SK-N-SH (cell line): ENCODE measurements at regions of chr11 and their contacts with region 1.

Region 1: DNA sequence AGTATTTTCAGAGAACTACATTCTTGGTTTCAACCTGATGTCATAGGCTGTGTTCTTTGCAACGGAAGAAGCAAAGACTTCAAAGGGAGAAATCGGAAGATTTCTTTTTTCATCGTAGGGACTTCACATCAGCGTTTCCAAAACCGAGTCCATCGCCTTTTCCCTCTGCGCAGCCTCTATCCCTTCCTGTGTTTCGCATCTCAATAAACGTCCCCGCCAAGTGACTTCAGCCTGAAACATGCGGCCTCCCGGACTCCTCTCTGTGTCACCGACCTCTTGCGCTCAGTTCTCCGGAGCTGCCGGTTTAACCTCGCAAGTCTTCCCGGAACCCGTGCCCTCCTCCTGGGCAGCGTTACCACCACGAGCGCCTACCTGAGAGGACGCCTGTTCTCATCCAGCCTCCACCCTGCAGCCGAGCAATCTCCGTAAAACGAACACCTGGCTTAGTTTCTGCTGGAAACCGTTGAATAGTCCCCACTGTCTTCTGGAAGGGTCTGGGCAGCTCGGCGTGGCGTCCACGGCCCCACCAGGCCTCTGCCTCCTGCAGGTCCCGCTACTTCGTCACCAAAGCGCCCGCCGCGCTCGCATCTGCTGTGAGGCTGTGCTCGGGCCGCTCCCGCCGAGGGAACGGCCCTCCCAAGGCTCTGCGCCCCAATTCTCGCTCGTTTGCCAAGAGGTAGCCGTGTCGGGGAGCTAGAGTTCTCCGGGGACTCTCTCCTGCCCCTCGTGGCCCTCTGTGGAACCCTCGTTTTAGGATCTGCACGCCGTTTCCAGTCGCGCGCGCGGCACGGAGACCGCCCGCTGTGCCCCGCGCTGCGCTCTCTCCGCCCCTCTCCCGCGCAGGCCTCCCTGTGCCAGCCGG is at the start of gene GLB1L3:
- DNase-seq: peak; percentile 84
- H3K4me3 ChIP-seq: peak within 1 kb of the TSS; percentile 35 to 42; a peak in 3 of 4 replicates
- H3K27ac ChIP-seq: no peak within 1 kb of the TSS
- H3K4me1 ChIP-seq: peaks cover 0 to 7% of the 10 kb centered on the region in 2 experiments; a peak in 1 of 4 replicates
- H3K27me3 ChIP-seq: peaks cover 53% of the 10 kb centered on the region
- CTCF ChIP-seq: peak; percentile 42
- EP300 ChIP-seq: no peak
- RAD21 ChIP-seq: no peak
- polyA plus RNA-seq, gene GLB1L3: 0.10 TPM in 1 of 2 replicates, not detected in the other

Region 2: DNA sequence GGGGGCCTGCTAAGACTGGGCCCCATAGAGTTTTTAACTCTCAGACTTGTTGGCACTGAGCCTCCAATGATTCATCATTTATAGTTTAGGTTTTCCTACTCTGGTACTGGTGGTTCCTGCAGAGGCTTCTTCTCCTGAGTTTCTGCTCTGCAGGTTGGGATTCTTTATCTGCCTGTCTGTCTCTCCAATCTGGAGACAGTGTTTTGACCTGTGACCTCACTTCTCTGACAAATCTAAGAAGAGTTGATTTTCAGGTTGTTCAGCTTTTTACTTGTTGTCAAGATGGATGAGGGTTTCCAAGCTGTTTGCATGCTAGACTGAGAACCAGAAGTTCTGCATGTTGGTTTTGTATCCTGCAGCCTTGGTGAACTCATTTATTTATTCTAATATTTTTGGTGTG is 143.0 kb before region 1 on chr11:
- CTCF ChIA-PET with region 1: no interaction called
- POLR2A ChIA-PET with region 1: no interaction called
- DNase-seq: no peak
- H3K4me3 ChIP-seq: no peak overlapping the region
- H3K27ac ChIP-seq: no peak overlapping the region
- H3K4me1 ChIP-seq: no peaks in the 10 kb centered on the region
- H3K27me3 ChIP-seq: no peaks in the 10 kb centered on the region
- CTCF ChIP-seq: no peak
- EP300 ChIP-seq: no peak
- RAD21 ChIP-seq: no peak

Region 3: DNA sequence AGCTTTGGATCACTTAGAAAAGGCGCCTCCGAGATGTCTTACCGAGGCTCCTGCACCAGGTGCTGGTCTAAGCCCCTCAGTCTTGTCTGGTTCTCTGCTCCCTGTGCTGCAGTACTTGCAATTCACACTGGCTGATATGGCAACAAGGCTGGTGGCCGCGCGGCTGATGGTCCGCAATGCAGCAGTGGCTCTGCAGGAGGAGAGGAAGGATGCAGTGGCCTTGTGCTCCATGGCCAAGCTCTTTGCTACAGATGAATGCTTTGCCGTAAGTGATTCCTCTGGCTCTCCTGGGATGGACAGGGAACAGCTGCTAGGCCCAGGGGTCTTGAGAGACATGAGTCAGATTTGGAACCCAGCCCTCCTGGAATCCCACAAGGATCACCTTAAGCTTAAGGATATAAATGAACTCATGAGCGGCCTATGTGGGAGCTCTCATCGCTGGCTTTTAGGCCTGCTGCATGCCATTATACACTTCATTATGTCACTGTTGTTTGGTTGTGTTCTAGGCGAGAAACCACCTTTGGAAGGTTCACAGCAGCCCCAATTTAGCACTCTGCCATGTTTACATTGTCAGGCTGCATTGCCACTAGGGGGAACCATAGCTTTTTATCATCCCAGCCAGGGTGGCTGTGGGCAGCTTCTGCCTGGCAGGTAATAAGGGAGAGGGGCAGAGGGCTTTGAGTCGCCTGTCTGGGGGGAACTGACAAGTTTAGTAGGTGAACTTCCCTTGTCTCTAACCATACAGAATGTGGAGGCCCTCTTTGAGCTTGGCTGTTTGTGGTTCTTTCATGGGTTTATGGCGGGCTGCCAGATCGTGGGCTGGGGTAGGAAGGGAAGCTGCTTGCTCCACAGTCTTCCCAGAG is 13.9 kb before region 1 on chr11:
- CTCF ChIA-PET with region 1: interaction called, 12 read pairs
- POLR2A ChIA-PET with region 1: no interaction called
- DNase-seq: peak; percentile 66
- H3K4me3 ChIP-seq: no peak overlapping the region
- H3K27ac ChIP-seq: no peak overlapping the region
- H3K4me1 ChIP-seq: no peaks in the 10 kb centered on the region
- H3K27me3 ChIP-seq: no peaks in the 10 kb centered on the region
- CTCF ChIP-seq: peak; percentile 57
- EP300 ChIP-seq: no peak
- RAD21 ChIP-seq: peak; percentile 53

Region 4: DNA sequence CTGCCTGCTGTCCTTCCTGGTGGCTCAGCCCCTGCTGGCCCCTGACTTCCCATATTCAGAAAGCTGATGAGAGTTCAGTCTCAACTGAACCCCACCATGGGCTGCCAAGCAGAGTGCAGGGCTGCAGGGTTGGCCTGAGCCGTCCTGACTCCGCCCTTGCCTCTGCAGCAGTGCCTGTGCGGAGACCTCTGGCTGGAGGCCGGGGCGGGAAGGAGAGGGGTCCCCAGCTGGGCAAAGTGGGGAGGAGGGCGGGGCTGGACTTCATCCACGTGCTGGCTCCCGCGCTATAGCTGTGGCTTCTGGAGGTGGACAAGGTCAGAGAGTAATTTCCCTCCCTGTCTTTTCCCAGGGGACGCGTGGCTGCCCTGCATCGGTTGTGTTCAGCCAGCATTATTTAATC is 14.0 kb after region 1 on chr11:
- CTCF ChIA-PET with region 1: interaction called, 16 read pairs
- POLR2A ChIA-PET with region 1: no interaction called
- DNase-seq: no peak
- H3K4me3 ChIP-seq: no peak overlapping the region
- H3K27ac ChIP-seq: no peak overlapping the region
- H3K4me1 ChIP-seq: no peaks in the 10 kb centered on the region
- H3K27me3 ChIP-seq: no peaks in the 10 kb centered on the region
- CTCF ChIP-seq: no peak
- EP300 ChIP-seq: no peak
- RAD21 ChIP-seq: no peak